Activated CD4-positive, alpha-beta T cell treated with anti-CD3 and anti-CD28 coated beads for 36 hours (primary cell): ENCODE measurements at regions of chr16 and their contacts with region 1.

Region 1: GRCh38 chr16:79316004-79316458 is 284.5 kb downstream of the MAF start:
- DNase-seq: peak; percentile 85
- ATAC-seq: peak; percentile 89
- H3K4me3 Mint-ChIP-seq: no peak overlapping the region
- H3K27ac Mint-ChIP-seq: peak overlapping the region; percentile 88
- H3K4me1 Mint-ChIP-seq: peaks cover 28% of the 10 kb centered on the region
- H3K27me3 Mint-ChIP-seq: peaks cover 15% of the 10 kb centered on the region

Region 2: DNA sequence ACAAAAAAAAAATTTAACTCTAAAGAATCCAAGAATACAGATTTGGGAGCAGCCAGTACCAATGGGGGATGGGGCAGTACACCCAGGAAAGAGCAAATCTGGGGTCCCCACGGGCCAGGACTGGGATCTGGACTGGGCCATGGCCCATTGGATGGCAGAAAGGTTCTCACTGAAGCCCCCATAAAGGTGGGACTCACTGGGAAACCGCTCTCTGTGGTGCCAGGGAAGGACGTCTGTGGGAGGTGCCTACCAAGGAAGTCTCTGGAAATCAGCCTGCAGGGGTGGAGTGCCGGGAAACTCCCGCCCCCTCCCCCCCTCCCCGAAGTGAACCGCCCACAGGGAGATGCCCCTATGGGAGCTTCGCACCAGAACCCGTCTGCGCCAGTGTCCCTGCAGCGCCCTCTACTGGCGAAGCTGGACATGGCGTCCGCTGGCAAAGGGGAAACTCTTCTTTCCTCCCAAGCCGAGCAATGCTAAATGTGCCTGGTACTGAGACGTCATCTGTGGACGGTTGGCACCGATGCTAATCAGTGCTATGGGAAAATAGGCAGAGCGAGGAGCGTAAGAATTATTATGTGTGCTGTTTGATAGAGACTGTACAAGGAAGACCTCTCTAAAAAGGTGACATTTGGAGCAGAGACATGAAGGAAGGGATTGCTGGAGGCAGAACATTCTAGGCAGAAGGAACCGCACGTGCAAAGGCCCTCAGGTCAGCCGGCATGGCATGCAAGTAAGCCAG is 545.5 kb before region 1 on chr16:
- CTCF ChIA-PET with region 1: no interaction called
- POLR2A ChIA-PET with region 1: interaction called, 6 read pairs
- intact Hi-C with region 1: loop called in 1 of 2 experiments (anchors 10 kb)
- DNase-seq: peak; percentile 90
- ATAC-seq: peak; percentile 23
- H3K4me3 Mint-ChIP-seq: peak overlapping the region; percentile 20
- H3K27ac Mint-ChIP-seq: peak overlapping the region; percentile 79
- H3K4me1 Mint-ChIP-seq: peaks cover 57% of the 10 kb centered on the region
- H3K27me3 Mint-ChIP-seq: peaks cover 6% of the 10 kb centered on the region

Region 3: GRCh38 chr16:78900044-78900811 is 415.8 kb before region 1 on chr16:
- CTCF ChIA-PET with region 1: no interaction called
- POLR2A ChIA-PET with region 1: no interaction called
- intact Hi-C with region 1: loop called (anchors 1 kb)
- DNase-seq: no peak
- ATAC-seq: peak; percentile 55
- H3K4me3 Mint-ChIP-seq: no peak overlapping the region
- H3K27ac Mint-ChIP-seq: peak overlapping the region; percentile 80
- H3K4me1 Mint-ChIP-seq: peaks cover 52% of the 10 kb centered on the region
- H3K27me3 Mint-ChIP-seq: no peaks in the 10 kb centered on the region

Region 4: DNA sequence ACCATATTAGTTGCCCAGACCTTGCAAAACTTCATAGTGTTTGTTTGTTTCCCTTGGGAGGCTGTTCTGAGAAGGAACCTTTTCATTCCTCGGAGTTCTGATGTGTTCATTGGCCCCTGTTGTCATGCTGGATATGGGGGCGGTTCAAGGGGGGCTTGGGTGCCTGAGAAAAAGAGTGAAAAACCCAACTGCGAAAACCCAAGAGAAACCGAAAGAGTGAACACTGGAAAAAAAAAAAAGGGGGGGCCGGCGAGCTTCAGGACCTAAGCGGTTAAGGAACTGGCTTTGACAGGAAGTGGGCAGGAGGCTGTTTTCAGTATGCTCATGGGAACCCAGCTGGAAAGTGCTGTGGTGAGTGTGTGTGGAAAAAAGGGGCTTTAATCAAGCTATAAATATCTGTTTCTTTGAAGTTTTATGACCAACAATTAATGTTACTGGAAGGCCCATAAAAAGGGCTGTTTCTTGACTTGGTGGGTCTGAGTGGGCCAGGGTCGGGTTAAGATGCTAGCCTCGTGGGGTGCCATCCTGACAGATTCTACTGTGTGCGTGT is 226.2 kb before region 1 on chr16:
- CTCF ChIA-PET with region 1: no interaction called
- POLR2A ChIA-PET with region 1: no interaction called
- intact Hi-C with region 1: loop called in 1 of 2 experiments (anchors 1 kb)
- DNase-seq: peak; percentile 82
- ATAC-seq: peak; percentile 70
- H3K4me3 Mint-ChIP-seq: peak overlapping the region; percentile 66
- H3K27ac Mint-ChIP-seq: peak overlapping the region; percentile 95
- H3K4me1 Mint-ChIP-seq: peaks cover 57% of the 10 kb centered on the region
- H3K27me3 Mint-ChIP-seq: no peaks in the 10 kb centered on the region

Region 5: DNA sequence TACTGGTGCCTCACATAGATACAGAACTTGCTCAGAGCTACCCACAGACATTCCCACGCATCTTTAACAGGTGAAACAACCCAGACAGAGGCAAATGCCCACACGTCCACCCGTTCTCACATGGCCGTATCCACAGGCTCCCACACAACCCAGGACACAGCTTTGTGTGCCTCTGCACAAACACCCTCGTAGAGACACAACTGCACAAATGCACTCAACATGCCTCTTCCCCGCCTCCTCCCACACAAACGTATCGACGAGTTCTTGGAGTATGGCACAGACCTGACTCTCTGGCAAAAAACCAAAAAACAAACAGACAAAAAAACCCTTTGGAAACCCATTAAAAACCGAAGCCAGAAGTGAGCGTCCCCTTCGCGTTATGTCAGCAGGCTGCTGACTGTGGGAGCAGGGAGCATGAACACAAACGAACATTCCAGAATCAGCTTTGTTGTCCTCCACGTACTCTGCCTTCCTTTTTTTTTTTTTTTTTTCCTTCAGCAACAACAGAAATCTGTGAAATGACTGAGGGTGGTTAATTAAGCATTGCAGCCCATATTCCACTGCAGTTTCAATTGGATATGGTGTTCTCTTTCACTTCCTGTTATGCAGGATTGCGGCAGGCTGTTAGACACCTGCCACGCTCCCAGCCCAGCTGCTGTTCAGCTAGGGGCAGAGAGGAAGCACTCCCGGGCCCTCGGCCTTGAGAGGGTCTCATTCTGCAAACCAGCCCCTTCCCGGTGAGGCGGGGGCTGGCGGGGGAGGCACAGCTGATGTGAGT is 29.2 kb before region 1 on chr16:
- CTCF ChIA-PET with region 1: interaction called, 7 read pairs
- POLR2A ChIA-PET with region 1: interaction called, 3 read pairs
- intact Hi-C with region 1: loop called (anchors 1 kb)
- DNase-seq: peak; percentile 63
- ATAC-seq: peak; percentile 70
- H3K4me3 Mint-ChIP-seq: peak overlapping the region; percentile 34
- H3K27ac Mint-ChIP-seq: peak overlapping the region; percentile 86
- H3K4me1 Mint-ChIP-seq: peaks cover 52% of the 10 kb centered on the region
- H3K27me3 Mint-ChIP-seq: peaks cover 12% of the 10 kb centered on the region

Region 6: GRCh38 chr16:79628501-79628975 is 312.5 kb after region 1 on chr16:
- CTCF ChIA-PET with region 1: no interaction called
- POLR2A ChIA-PET with region 1: no interaction called
- intact Hi-C with region 1: loop called in 1 of 2 experiments (anchors 1 kb)
- DNase-seq: peak; percentile 86
- ATAC-seq: peak; percentile 94
- H3K4me3 Mint-ChIP-seq: no peak overlapping the region
- H3K27ac Mint-ChIP-seq: peak overlapping the region; percentile 71
- H3K4me1 Mint-ChIP-seq: peaks cover 14% of the 10 kb centered on the region
- H3K27me3 Mint-ChIP-seq: peaks cover 24% of the 10 kb centered on the region